Endothelial cell of umbilical vein (primary cell): ENCODE measurements at regions of chr6 and their contacts with region 1.

Region 1: GRCh38 chr6:53309059-53309900 is 39.5 kb downstream of the ELOVL5 start:
- DNase-seq: peak; percentile 29
- H3K4me3 ChIP-seq: no peak overlapping the region
- H3K27ac ChIP-seq: peak overlapping the region; percentile 34
- H3K4me1 ChIP-seq: peaks cover 33% of the 10 kb centered on the region
- H3K27me3 ChIP-seq: no peaks in the 10 kb centered on the region
- CTCF ChIP-seq: no peak
- POLR2A ChIP-seq: no peak

Region 2: GRCh38 chr6:51494342-51494741 is 1814.9 kb before region 1 on chr6:
- CTCF ChIA-PET with region 1: no interaction called
- POLR2A ChIA-PET with region 1: no interaction called
- dilution Hi-C with region 1: no loop called
- intact Hi-C with region 1: no loop called
- DNase-seq: no peak
- H3K4me3 ChIP-seq: no peak overlapping the region
- H3K27ac ChIP-seq: no peak overlapping the region
- H3K4me1 ChIP-seq: no peaks in the 10 kb centered on the region
- H3K27me3 ChIP-seq: no peaks in the 10 kb centered on the region
- CTCF ChIP-seq: no peak
- POLR2A ChIP-seq: no peak

Region 3: GRCh38 chr6:53328375-53328774 is 19.1 kb after region 1 on chr6:
- CTCF ChIA-PET with region 1: interaction called, 5 read pairs
- POLR2A ChIA-PET with region 1: no interaction called
- dilution Hi-C with region 1: no loop called
- intact Hi-C with region 1: loop called (anchors 2 kb)
- DNase-seq: no peak
- H3K4me3 ChIP-seq: no peak overlapping the region
- H3K27ac ChIP-seq: no peak overlapping the region
- H3K4me1 ChIP-seq: peaks cover 14% of the 10 kb centered on the region
- H3K27me3 ChIP-seq: no peaks in the 10 kb centered on the region
- CTCF ChIP-seq: no peak
- POLR2A ChIP-seq: no peak